Activated naive CD4-positive, alpha-beta T cell treated with anti-CD3 and anti-CD28 coated beads, Interleukin-2, amount 10 ng/mL, durations not matched to agents 7 days and 5 days (primary cell): ENCODE measurements at regions of chr14 and their contacts with region 1.

Region 1: GRCh38 chr14:50060871-50061663 is 55.3 kb downstream of the VCPKMT start:
- DNase-seq: peak; percentile 61
- H3K4me3 Mint-ChIP-seq: peak overlapping the region; percentile 88
- H3K27ac Mint-ChIP-seq: peak overlapping the region; percentile 100
- H3K4me1 Mint-ChIP-seq: peaks cover 87% of the 10 kb centered on the region
- H3K27me3 Mint-ChIP-seq: no peaks in the 10 kb centered on the region

Region 2: DNA sequence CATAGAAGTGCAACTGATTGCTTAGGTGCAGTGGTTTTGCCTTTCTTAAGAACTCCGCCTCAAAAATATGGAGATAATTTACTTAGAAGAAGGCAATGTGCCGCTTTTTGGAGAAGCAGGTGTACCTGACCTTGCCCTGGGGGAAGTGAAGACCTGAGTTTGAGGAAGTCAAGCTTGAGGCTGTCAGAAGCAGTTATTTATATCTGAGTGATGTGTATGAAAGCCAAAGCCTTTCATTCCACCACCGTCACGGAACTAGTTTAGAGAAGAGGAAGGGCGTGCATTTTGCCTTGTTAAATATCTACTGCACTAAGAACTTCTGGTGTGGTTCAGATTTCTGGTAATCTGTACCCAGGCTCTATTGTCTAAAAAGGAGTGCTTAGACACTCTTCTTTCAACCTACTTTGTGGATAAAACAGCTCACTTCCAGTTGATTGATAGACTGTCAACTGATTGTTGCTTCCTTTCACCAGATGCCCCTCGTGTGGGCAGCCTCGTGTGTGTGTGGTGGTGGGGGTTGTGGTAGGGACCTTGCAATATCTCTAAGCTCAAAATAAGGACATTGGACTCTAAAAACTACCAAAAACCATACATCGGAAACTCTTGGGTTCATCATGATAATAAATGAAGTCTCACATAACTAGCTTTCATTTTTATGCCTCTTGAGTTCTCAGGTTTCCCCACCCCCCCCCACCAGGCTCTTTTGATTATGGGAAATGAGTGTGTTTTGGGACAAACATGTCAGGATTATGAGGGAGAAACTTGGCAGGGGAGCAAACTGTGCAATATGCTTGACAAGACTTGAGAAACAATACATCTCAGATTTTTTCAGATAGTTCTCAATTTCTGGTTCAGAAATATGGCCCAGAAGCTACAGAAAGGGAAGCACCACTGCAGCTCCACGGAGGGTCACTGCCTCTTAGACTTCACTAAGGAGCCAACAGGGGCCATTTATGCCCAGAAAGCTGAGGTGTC is 89.6 kb before region 1 on chr14:
- CTCF ChIA-PET with region 1: interaction called, 11 read pairs
- DNase-seq: peak; percentile 75
- H3K4me3 Mint-ChIP-seq: peak overlapping the region; percentile 77
- H3K27ac Mint-ChIP-seq: peak overlapping the region; percentile 100
- H3K4me1 Mint-ChIP-seq: peaks cover 80% of the 10 kb centered on the region
- H3K27me3 Mint-ChIP-seq: no peaks in the 10 kb centered on the region

Region 3: DNA sequence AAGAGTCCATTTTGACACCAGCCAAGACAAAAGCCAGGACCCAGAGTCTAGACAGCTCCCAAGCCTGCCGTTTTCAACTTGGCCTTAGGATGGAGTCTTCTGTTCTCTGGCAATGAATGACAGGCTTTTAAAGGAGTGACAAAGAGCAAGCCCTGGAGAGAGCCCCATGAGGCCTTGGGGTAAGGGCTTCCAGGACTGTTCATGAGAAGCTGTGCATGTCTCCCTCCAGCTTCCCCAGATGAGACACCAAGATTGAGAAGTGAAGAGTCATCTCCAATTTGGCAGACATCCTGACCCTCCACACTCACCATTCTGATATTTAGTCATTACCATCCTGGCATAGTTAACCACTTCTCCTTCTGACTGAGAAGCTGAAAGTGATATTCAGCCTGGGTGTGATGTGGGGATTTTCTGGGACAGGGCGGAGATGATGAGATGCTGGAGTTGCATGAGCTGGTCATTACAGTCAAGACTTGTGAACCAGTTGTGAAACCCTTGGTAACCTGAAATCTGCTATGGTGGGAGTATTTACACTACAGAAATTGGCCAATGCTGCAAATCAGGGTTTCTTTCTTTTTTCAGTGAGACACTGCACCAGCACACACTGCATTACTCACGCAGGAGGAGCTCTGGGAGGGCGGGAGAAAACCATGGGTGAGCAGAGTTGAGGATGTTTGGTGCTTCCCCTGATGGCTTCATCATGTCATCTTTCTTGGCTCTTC is 22.5 kb before region 1 on chr14:
- CTCF ChIA-PET with region 1: interaction called, 30 read pairs
- DNase-seq: peak; percentile 50
- H3K4me3 Mint-ChIP-seq: peak overlapping the region; percentile 25
- H3K27ac Mint-ChIP-seq: peak overlapping the region; percentile 97
- H3K4me1 Mint-ChIP-seq: peaks cover 73% of the 10 kb centered on the region
- H3K27me3 Mint-ChIP-seq: no peaks in the 10 kb centered on the region

Region 4: DNA sequence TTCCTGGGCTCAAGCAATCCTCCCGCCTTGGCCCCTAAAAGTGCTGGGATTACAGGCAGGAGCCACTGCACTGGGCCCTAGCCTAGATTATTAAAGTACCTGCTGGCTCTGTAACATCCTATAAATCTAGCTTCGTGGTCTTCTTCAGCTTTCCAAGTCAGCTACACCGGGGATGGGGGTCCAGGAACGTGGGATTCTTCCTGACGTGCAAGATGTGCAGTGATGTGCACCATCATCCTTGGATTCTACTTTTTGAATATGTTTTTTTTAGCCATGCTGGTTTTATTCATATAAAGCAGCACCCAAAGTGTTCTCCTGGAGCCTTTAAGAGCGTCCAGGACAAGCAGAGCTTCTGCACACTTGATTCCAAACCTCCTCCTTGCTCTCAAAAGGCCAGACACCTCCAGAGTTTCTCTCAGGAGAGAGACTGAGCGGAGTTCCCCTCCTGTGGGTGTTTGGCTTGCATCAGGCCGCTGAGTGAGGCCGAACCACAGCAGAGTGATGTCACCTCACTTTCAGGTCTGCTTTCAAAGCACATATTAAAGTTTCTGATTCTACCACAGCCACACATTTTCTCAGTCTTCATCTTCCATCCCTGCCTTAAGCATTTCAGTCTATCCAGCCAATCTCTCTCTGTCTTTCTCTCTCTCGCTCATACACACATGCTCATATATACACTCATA is 21.9 kb after region 1 on chr14:
- CTCF ChIA-PET with region 1: interaction called, 13 read pairs
- DNase-seq: peak; percentile 91
- H3K4me3 Mint-ChIP-seq: peak overlapping the region; percentile 73
- H3K27ac Mint-ChIP-seq: peak overlapping the region; percentile 97
- H3K4me1 Mint-ChIP-seq: peaks cover 76% of the 10 kb centered on the region
- H3K27me3 Mint-ChIP-seq: no peaks in the 10 kb centered on the region